Activated CD4-positive, alpha-beta T cell treated with anti-CD3 and anti-CD28 coated beads, Interleukin-2, amount 10 ng/mL, durations not matched to agents 7 days and 5 days (primary cell): ENCODE measurements at regions of chr1 and their contacts with region 1.

Region 1: DNA sequence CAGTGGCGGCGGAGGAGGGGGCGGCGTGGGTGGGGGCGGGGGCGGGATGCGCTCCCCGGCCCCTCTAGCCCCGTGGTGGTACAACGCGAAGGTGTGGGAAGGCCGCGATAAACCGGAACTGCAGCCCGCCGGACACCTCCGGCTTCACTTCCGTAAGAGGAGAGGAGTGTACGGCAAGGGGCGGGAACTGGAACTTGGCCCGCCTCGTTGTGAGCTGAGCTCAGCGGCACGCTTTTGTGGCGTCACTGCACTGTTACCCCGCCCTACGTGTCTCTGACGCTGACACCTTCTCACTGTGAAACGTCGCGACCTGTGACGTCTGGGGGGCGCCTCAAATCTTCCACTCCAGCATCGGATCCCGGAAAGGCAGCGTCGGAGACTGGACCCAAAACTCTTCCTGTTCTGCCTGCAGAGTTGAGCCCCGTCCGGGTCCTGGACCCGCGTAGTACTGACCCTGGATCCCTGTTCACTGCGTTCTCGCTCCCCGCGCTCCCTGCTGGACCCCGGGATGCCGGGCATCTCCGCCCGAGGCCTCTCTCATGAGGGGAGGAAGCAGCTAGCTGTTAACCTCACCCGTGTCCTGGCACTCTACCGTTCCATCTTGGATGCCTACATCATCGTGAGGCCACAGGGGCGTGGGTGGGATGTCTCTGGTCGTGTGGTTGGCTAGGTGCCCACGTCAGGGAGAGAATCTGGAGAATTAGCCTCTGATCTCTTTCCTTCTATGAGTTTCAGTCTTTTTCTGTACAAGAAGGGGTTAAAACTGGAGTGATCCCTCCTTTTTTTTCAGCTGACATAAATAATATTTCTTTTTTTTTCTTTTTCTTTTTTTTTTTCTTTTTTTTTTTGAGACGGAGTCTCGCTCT is at the start of gene ISG20L2:
- DNase-seq: peak; percentile 98
- H3K4me3 Mint-ChIP-seq: no peak within 1 kb of the TSS
- H3K27ac Mint-ChIP-seq: no peak within 1 kb of the TSS
- H3K4me1 Mint-ChIP-seq: peaks cover 27% of the 10 kb centered on the region
- H3K27me3 Mint-ChIP-seq: no peaks in the 10 kb centered on the region
- total RNA-seq, gene ISG20L2: 47.0 to 58.0 TPM

Region 2: DNA sequence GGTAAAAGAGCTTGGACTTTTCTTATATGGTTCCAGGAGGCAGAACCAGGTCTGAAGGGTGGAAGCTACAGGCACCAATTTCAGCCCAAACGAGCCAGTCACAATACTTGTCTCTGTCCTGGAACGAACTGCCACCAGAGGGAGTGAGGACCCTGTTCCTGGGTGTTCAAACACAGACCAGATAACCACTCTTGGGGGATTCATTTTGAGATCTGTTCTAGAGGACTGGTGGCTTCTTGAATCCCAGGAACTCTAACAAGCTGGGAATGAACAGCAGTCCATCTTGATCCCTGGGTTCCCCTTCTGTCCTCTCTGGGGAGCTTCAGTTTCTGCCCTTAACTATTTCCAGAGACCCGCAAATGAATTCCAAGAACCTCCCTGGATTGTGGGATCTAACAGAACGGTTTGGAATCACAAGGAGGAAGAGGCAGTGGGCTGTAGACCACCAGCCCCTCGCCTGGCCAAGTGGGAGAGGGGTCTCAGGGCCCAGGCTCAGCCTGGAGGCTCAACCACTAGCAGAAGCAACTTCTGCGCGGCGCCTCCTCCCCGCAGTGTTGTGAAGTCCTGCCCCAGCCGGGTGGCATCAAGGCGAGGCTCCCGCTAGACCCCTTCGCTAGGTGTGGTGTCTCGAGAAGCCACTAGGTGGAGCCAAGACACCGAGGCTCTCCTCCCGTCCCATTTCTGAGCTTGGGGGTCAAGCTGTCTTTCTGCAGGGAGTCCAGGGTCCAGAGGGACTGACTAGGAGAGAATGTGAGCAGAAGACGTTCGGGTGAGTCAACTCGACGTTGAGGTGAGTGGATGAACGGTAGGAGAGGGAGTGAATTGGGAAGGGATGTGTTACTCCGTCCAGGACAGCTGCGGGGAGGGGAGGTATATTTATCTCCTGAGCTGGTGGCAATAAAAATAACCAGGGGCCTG is 39.5 kb before region 1 on chr1:
- CTCF ChIA-PET with region 1: interaction called, 106 read pairs
- POLR2A ChIA-PET with region 1: interaction called, 4 read pairs
- DNase-seq: peak; percentile 76
- H3K4me3 Mint-ChIP-seq: no peak overlapping the region
- H3K27ac Mint-ChIP-seq: no peak overlapping the region
- H3K4me1 Mint-ChIP-seq: peaks cover 31% of the 10 kb centered on the region
- H3K27me3 Mint-ChIP-seq: peaks cover 63% of the 10 kb centered on the region

Region 3: DNA sequence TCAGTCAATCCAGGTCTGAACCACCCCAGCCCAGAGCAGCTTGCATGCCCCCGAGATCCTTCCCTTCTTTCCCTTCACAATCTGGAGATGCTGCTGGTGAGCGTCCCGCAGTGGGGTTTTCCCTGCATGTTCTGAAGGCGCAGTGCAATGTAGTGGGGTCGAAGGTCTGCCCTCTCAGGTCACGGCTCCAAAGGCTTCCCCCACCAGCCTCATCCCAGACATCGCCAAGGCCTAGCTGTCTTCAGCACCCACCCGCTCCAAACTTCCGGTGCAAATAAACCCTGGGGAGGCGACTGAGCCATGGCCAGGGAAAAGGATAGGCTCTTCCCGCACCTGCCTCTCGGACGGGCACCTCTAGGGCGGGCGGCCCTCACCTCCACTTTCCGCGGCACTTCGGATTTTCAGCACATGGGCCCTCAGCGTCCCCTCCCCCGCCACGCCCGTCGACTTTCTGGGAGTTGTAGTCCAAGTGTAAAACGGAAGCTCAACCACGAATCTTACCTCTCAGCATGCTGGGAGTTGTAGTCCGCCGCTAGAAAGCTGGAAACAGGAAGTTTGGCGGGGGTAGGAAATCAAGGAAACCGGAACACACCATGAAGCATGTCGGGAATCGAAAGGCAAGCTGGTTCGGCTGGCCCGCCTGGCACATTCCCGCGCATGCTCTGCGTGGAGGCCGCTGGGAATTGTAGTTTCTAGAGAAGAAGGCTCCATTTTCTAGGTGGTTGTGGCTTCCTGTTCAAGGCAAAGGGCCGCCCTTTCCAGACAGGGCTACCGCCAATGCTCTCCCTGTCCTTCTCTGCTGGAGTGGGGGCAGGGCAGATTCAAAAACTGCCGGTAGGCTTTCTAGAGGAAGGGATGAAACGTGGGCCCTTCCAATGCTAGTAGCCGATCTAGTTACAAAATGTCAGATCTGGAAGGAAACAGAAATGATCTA is 12.1 kb after region 1 on chr1 and contains the start of gene MRPL24:
- CTCF ChIA-PET with region 1: interaction called, 63 read pairs
- POLR2A ChIA-PET with region 1: interaction called, 12 read pairs
- DNase-seq: peak; percentile 99
- H3K4me3 Mint-ChIP-seq: peak within 1 kb of the TSS; percentile 97
- H3K27ac Mint-ChIP-seq: peak within 1 kb of the TSS; percentile 95
- H3K4me1 Mint-ChIP-seq: peaks cover 53% of the 10 kb centered on the region
- H3K27me3 Mint-ChIP-seq: no peaks in the 10 kb centered on the region
- total RNA-seq, gene MRPL24: 50.4 to 54.7 TPM

Region 4: GRCh38 chr1:156767101-156767878 is 38.5 kb after region 1 on chr1 and contains the start of gene PRCC:
- CTCF ChIA-PET with region 1: interaction called, 31 read pairs
- POLR2A ChIA-PET with region 1: interaction called, 4 read pairs
- DNase-seq: peak; percentile 99
- H3K4me3 Mint-ChIP-seq: no peak within 1 kb of the TSS
- H3K27ac Mint-ChIP-seq: no peak within 1 kb of the TSS
- H3K4me1 Mint-ChIP-seq: peaks cover 41% of the 10 kb centered on the region
- H3K27me3 Mint-ChIP-seq: no peaks in the 10 kb centered on the region
- total RNA-seq, gene PRCC: 70.6 to 87.7 TPM

Region 5: GRCh38 chr1:156860113-156860627 is 131.3 kb after region 1 on chr1:
- CTCF ChIA-PET with region 1: interaction called, 76 read pairs
- POLR2A ChIA-PET with region 1: no interaction called
- DNase-seq: peak; percentile 49
- H3K4me3 Mint-ChIP-seq: peak overlapping the region; percentile 61
- H3K27ac Mint-ChIP-seq: no peak overlapping the region
- H3K4me1 Mint-ChIP-seq: peaks cover 46% of the 10 kb centered on the region
- H3K27me3 Mint-ChIP-seq: peaks cover 44% of the 10 kb centered on the region